ENCODE measurements at regions of chr10 and their contacts with region 1.

Region 1: GRCh38 chr10:91923371-91924211 is at the start of gene BTAF1:
- DNase-seq: peak; percentile 92 to 94 (median 93)
- H3K4me3 ChIP-seq: peak within 1 kb of the TSS; percentile 92 to 97 (median 92)
- H3K4me3 Mint-ChIP-seq: peak within 1 kb of the TSS; percentile 86 to 95
- H3K27ac ChIP-seq: peak within 1 kb of the TSS; percentile 93 to 98
- H3K27ac Mint-ChIP-seq: peak within 1 kb of the TSS; percentile 94 to 99 (median 96)
- H3K4me1 ChIP-seq: peaks cover 20 to 38% of the 10 kb centered on the region in 2 donors
- H3K4me1 Mint-ChIP-seq: peaks cover 35% of the 10 kb centered on the region
- H3K27me3 ChIP-seq: no peaks in the 10 kb centered on the region
- H3K27me3 Mint-ChIP-seq: peaks cover 0 to 3% (median 1%) of the 10 kb centered on the region in 3 donors
- CTCF ChIP-seq: no peak
- polyA plus RNA-seq, gene BTAF1: 3.7 to 59.8 (median 5.1) TPM

Region 2: GRCh38 chr10:91797874-91798648 is 125.5 kb before region 1 on chr10 and contains the start of gene TNKS2:
- intact Hi-C with region 1: loop called (anchors 5 kb)
- DNase-seq: peak; percentile 87 to 88 (median 87)
- H3K4me3 ChIP-seq: peak within 1 kb of the TSS; percentile 92 to 99 (median 94)
- H3K4me3 Mint-ChIP-seq: peak within 1 kb of the TSS; percentile 94 to 98
- H3K27ac ChIP-seq: peak within 1 kb of the TSS; percentile 90 to 92
- H3K27ac Mint-ChIP-seq: peak within 1 kb of the TSS; percentile 91 to 97 (median 94)
- H3K4me1 ChIP-seq: peaks cover 28 to 42% of the 10 kb centered on the region in 2 donors
- H3K4me1 Mint-ChIP-seq: peaks cover 42% of the 10 kb centered on the region
- H3K27me3 ChIP-seq: no peaks in the 10 kb centered on the region
- H3K27me3 Mint-ChIP-seq: peaks cover 0 to 3% (median 0%) of the 10 kb centered on the region in 3 donors
- CTCF ChIP-seq: no peak
- polyA plus RNA-seq, gene TNKS2: 20.7 to 25.4 (median 20.9) TPM

Region 3: DNA sequence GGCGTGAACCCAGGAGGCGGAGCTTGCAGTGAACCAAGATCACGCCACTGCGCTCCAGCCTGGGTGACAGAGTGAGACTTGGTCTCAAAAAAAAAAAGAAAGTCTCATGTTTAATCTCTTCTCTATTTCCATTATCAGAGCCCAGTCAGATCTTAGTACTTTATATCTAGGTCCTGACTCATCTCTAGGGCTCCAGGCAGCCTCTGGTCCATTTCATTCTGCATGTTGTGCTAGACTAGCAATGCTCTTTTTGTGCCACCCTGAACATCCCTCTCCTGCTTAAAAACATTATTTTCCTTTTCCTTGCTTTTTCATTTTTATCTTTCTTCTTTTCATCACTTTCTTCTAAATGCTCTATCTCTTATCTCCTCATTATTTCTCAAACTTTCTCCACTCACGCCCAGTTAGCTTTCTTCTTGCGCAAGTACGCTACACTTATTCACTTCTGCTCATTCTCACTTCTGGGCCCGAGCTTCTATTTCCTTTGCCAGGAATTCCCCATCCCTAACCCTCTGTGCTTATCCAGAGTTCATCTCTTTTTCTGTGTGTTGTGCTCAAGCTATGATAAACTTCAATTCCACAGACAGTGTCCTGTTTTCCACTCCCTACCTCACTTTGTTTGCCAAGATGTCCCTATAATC is 63.9 kb after region 1 on chr10:
- intact Hi-C with region 1: no loop called
- DNase-seq: no peak
- H3K4me3 ChIP-seq: no peak overlapping the region
- H3K4me3 Mint-ChIP-seq: no peak overlapping the region
- H3K27ac ChIP-seq: peak overlapping the region in 1 of 2 donors; percentile 15
- H3K27ac Mint-ChIP-seq: peak overlapping the region in 4 of 7 donors; percentile 19 to 83 (median 40)
- H3K4me1 ChIP-seq: no peaks in the 10 kb centered on the region
- H3K4me1 Mint-ChIP-seq: peaks cover 6% of the 10 kb centered on the region
- H3K27me3 ChIP-seq: no peaks in the 10 kb centered on the region
- H3K27me3 Mint-ChIP-seq: no peaks in the 10 kb centered on the region
- CTCF ChIP-seq: no peak

Measured in CD14-positive monocyte (primary cell).